ENCODE measurements at regions of chr1 and their contacts with region 1.

Region 1: GRCh38 chr1:33460947-33461629 is 11.4 kb upstream of the ZSCAN20 start:
- DNase-seq: peak; percentile 61 to 88
- H3K4me3 ChIP-seq: no peak overlapping the region
- H3K27ac ChIP-seq: peak overlapping the region; percentile 87 to 91
- H3K4me1 ChIP-seq: peaks cover 0 to 42% (median 26%) of the 10 kb centered on the region in 4 donors
- H3K27me3 ChIP-seq: no peaks in the 10 kb centered on the region
- CTCF ChIP-seq: no peak

Region 2: GRCh38 chr1:33228935-33229487 is 232.1 kb before region 1 on chr1:
- intact Hi-C with region 1: loop called (anchors 10 kb)
- DNase-seq: peak in 1 of 2 donors; percentile 33
- H3K4me3 ChIP-seq: no peak overlapping the region
- H3K27ac ChIP-seq: no peak overlapping the region
- H3K4me1 ChIP-seq: no peaks in the 10 kb centered on the region
- H3K27me3 ChIP-seq: no peaks in the 10 kb centered on the region
- CTCF ChIP-seq: no peak

Region 3: DNA sequence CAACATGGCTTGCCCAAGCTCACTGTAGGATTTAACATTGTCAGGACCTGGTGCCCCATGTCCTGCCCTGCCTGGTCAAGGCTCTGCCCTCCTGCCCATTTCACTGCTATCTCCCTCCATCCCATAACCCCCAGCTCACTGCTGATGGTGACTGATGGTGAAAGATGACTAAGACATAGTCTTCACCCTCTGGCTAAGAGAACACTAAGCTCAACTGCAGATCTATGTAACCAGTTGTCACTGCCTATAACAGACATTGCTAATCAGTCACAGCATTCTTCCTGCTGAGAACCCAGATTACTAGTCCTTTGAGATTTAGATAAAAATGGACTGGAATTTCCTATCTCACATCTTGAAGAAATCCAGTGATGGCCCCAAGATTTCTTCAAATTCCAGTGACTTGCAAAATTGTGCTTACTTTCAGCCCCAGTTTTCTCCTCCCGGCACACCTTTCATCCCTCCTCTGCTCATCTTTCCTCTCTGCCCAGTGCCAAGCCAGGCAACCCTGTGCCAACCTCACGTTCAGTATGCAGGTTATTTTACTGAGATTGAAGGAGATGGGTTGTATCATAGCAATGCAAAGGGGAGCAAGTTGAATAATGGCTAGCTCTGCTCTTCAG is 212.8 kb before region 1 on chr1:
- intact Hi-C with region 1: no loop called
- DNase-seq: no peak
- H3K4me3 ChIP-seq: no peak overlapping the region
- H3K27ac ChIP-seq: no peak overlapping the region
- H3K4me1 ChIP-seq: no peaks in the 10 kb centered on the region
- H3K27me3 ChIP-seq: peaks cover 0 to 3% of the 10 kb centered on the region in 2 donors
- CTCF ChIP-seq: no peak

Region 4: DNA sequence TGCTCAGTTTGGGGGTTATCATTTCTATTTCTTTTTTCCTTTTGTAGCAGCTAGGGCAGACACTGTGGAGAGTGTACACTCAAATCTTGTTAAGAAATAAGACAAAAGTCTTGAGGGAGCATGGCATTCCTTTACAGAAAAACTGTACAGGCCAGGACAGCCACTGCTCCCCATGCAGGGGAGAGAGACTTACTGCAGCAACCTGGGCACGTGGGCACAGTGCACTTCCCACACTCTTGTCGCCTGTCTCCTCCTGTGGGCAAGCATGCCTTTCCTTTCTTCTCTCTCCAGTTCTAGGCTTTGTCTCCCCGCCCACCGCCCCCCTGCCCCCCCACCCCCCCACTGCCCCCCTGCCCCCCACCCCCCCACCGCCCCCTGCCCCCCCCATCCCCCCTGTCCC is 82.1 kb before region 1 on chr1:
- intact Hi-C with region 1: loop called (anchors 10 kb)
- DNase-seq: no peak
- H3K4me3 ChIP-seq: no peak overlapping the region
- H3K27ac ChIP-seq: no peak overlapping the region
- H3K4me1 ChIP-seq: peaks cover 0 to 16% (median 5%) of the 10 kb centered on the region in 4 donors
- H3K27me3 ChIP-seq: no peaks in the 10 kb centered on the region
- CTCF ChIP-seq: no peak

Region 5: DNA sequence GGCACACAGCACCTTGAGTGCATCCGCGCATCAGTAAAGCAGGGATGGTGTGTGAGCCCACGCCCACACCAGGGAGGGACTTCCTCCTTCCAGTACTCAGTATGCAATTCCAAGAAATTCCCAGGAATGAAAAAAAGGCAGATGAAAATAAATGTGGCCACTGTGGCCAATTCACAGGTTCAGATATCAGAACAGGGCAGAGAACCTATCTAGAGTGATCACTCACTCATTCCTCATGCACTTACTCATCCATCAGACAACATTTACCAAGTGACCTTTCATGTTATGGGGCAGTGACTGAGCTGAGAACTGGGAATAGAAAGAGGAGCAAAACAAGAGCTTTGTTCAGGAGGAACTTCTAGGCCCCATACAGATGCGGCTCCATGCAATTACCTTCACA is 125.0 kb after region 1 on chr1:
- intact Hi-C with region 1: no loop called
- DNase-seq: no peak
- H3K4me3 ChIP-seq: no peak overlapping the region
- H3K27ac ChIP-seq: no peak overlapping the region
- H3K4me1 ChIP-seq: no peaks in the 10 kb centered on the region
- H3K27me3 ChIP-seq: no peaks in the 10 kb centered on the region
- CTCF ChIP-seq: no peak

Region 6: GRCh38 chr1:33606272-33606671 is 145.2 kb after region 1 on chr1:
- intact Hi-C with region 1: no loop called
- DNase-seq: no peak
- H3K4me3 ChIP-seq: no peak overlapping the region
- H3K27ac ChIP-seq: no peak overlapping the region
- H3K4me1 ChIP-seq: peaks cover 0 to 6% (median 2%) of the 10 kb centered on the region in 4 donors
- H3K27me3 ChIP-seq: no peaks in the 10 kb centered on the region
- CTCF ChIP-seq: no peak

Region 7: GRCh38 chr1:33930346-33931110 is 469.4 kb after region 1 on chr1:
- intact Hi-C with region 1: no loop called
- DNase-seq: no peak
- H3K4me3 ChIP-seq: no peak overlapping the region
- H3K27ac ChIP-seq: no peak overlapping the region
- H3K4me1 ChIP-seq: no peaks in the 10 kb centered on the region
- H3K27me3 ChIP-seq: peaks cover 0 to 8% of the 10 kb centered on the region in 2 donors
- CTCF ChIP-seq: no peak

Measured in tibial artery (tissue), 4 donors.